ENCODE measurements at regions of chr2 and their contacts with region 1.

Region 1: GRCh38 chr2:68185541-68186164 is 28.0 kb downstream of the PNO1 start:
- DNase-seq: peak; percentile 42
- ATAC-seq: 0 out of 2 replicates have a peak, but pooled peaks have one; percentile 73
- H3K4me3 ChIP-seq: no peak overlapping the region
- H3K27ac ChIP-seq: no peak overlapping the region
- H3K4me1 ChIP-seq: peaks cover under 1% of the 10 kb centered on the region; the same call in 1 of the 2 replicates
- H3K27me3 ChIP-seq: no peaks in the 10 kb centered on the region
- CTCF ChIP-seq: peak; percentile 86

Region 2: GRCh38 chr2:68157002-68157401 is 28.7 kb before region 1 on chr2:
- CTCF ChIA-PET with region 1: no interaction called
- POLR2A ChIA-PET with region 1: interaction called, 10 read pairs
- in situ Hi-C with region 1: no loop called
- intact Hi-C with region 1: no loop called
- DNase-seq: no peak
- ATAC-seq: peak; percentile 58
- H3K4me3 ChIP-seq: peak overlapping the region; percentile 97 to 99
- H3K27ac ChIP-seq: peak overlapping the region; percentile 97
- H3K4me1 ChIP-seq: peaks cover 8% of the 10 kb centered on the region; the same call in 1 of the 2 replicates
- H3K27me3 ChIP-seq: no peaks in the 10 kb centered on the region
- CTCF ChIP-seq: no peak

Region 3: DNA sequence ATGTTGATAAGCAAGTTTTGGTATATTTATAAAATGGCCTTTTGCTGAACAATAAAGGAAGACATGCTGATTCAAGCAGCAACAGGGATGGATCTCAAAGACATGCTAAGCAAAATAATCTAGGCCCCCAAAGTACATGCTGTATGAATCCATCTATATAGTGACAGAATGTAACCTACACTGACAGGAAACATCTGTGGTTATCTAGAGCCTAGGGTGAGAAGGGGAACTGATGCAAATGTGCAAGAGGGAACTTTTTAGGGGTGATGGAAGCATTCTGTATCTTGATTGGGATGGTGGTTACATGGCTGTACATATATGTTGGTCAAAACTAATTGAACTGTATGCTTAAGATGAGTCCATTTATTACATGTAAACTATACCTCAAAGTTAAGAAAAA is 109.9 kb after region 1 on chr2:
- CTCF ChIA-PET with region 1: no interaction called
- POLR2A ChIA-PET with region 1: no interaction called
- in situ Hi-C with region 1: no loop called
- intact Hi-C with region 1: no loop called
- DNase-seq: no peak
- ATAC-seq: no peak
- H3K4me3 ChIP-seq: no peak overlapping the region
- H3K27ac ChIP-seq: no peak overlapping the region
- H3K4me1 ChIP-seq: no peaks in the 10 kb centered on the region
- H3K27me3 ChIP-seq: no peaks in the 10 kb centered on the region
- CTCF ChIP-seq: no peak

Measured in Panc1 (cell line).